H1 (cell line): ENCODE measurements at regions of chr1 and their contacts with region 1.

Region 1: DNA sequence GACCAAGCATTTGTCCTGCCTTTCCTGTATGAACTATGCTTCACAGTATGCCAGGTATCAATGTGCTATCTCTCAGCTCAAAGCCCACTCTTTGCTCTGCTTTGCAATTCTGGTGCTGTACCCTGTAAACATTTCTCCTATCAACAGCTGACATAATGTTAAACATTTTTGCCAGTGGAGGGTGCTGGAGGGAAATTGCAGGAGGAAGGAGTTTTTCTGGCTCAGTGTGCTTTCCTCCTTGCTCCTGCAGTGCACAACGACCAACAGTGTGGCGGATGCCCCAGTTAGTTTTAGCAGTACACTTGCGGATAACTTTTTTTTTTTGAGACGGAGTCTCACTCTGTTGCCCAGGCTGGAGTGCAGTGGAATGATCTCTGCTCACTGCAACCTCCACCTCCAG is 67.1 kb upstream of the PTGFRN start:
- DNase-seq: no peak
- H3K4me3 ChIP-seq: no peak overlapping the region
- H3K27ac ChIP-seq: no peak overlapping the region
- H3K4me1 ChIP-seq: no peaks in the 10 kb centered on the region
- H3K27me3 ChIP-seq: no peaks in the 10 kb centered on the region
- CTCF ChIP-seq: peak in 2 of 3 experiments; percentile 39 to 45; a peak in 3 of 4 replicates
- EP300 ChIP-seq: no peak
- POLR2A ChIP-seq: no peak
- RAD21 ChIP-seq: peak; percentile 43 to 63

Region 2: GRCh38 chr1:116808200-116808847 is 34.3 kb before region 1 on chr1:
- CTCF ChIA-PET with region 1: no interaction called
- POLR2A ChIA-PET with region 1: no interaction called
- DNase-seq: no peak
- H3K4me3 ChIP-seq: no peak overlapping the region
- H3K27ac ChIP-seq: no peak overlapping the region
- H3K4me1 ChIP-seq: peaks cover 0 to 7% (median 0%) of the 10 kb centered on the region in 4 experiments; a peak in 4 of 7 replicates
- H3K27me3 ChIP-seq: no peaks in the 10 kb centered on the region
- CTCF ChIP-seq: no peak
- EP300 ChIP-seq: no peak
- POLR2A ChIP-seq: no peak
- RAD21 ChIP-seq: no peak

Region 3: DNA sequence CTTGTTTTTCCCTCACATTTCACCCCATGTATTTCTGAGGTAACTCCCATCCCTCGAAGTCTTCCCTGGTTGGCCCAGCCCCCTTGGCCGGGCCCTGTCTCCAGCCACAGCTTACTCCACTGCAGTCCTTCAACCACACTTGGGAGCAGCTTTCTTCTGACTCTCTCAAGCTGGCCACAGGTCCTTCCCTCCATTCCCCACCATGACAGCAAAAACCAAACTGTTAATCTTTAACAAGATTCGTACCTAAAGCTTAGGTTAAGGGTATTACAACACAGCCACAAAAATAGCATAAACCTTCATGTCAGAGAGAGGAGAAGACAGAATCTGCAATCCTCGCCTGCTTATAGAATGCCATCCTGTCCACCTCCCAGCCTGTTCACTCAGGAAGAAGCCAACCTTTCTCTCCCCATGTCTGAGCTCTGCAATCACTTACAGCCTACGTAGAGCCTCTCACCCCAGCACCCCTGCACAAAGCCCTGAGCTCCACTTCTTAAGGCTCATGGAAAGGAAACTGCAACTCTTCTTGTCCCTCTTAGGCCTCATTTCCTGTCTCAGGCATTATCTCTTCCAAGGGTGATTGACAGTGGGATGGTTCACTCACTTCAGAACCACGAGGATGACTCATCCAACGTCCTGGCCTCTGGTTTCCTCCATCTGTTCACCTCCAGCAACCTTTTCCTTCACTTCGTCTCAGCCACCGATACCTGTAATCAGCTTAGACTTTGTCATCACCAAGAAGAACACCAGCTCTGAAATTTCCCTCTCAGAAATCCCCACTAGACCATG is 15.6 kb before region 1 on chr1:
- CTCF ChIA-PET with region 1: interaction called, 17 read pairs
- POLR2A ChIA-PET with region 1: no interaction called
- DNase-seq: no peak
- H3K4me3 ChIP-seq: no peak overlapping the region
- H3K27ac ChIP-seq: no peak overlapping the region
- H3K4me1 ChIP-seq: peaks cover 0 to 11% (median 8%) of the 10 kb centered on the region in 4 experiments; a peak in 5 of 7 replicates
- H3K27me3 ChIP-seq: no peaks in the 10 kb centered on the region
- CTCF ChIP-seq: no peak
- EP300 ChIP-seq: no peak
- POLR2A ChIP-seq: no peak
- RAD21 ChIP-seq: no peak

Region 4: DNA sequence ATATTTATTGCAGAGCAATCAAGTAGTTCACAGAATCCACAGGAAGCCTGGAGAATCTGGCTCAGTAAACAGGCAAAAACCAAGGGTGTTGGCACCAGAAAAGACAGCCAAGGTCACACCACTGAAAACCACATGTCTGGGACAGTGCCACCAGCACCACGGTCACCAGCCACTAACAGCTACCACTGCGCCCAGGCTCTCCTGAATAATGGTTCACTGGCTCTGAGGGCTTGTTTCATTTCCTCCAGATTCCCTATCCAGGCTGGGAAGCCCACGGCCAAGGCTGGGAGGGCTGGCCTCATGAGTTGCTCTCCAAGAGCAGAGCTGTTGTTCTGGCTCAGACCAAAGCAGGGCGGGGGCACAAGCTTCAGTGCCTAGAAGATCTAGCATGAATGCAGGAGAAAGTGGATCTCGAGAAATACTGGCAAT is 12.6 kb after region 1 on chr1:
- CTCF ChIA-PET with region 1: interaction called, 10 read pairs
- POLR2A ChIA-PET with region 1: interaction called, 5 read pairs
- DNase-seq: no peak
- H3K4me3 ChIP-seq: no peak overlapping the region; a peak in 1 of 8 replicates
- H3K27ac ChIP-seq: no peak overlapping the region
- H3K4me1 ChIP-seq: peaks cover 17 to 32% (median 29%) of the 10 kb centered on the region in 4 experiments
- H3K27me3 ChIP-seq: no peaks in the 10 kb centered on the region
- CTCF ChIP-seq: no peak
- EP300 ChIP-seq: no peak
- POLR2A ChIP-seq: no peak
- RAD21 ChIP-seq: no peak

Region 5: DNA sequence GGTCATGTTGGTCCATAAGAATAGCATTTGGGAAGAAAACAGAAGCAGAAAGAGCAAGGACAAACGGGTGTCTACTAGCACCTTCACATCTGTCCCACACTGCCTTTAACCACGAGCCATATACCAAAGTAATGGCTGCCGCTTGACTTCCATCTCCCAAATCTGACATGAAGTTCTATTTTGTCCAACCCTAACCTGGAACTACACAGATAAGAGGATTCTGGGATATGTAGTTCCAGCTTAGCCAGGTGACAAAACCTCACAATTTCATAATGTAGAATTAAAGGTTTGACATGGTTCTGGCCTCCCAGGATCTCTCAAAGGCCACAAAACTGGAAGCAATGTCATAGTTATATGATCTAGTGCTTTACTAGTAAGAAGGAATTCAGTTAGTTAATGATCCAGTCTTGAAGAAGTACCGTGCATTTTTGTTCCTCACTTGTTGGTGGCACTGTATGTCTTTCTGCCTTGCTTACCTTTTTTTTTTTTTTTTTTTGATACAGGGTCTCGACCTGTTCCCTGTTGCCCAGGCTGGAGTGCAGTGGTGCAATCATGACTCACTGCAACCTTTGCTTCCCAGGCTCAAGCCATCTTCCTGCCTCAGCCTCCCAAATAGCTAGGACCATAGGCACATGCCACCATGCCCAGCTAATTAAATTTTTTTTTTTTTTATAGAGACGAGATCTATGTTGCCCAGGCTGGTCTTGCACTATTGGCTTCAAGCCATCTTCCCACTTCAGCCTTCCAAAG is 84.6 kb after region 1 on chr1:
- CTCF ChIA-PET with region 1: no interaction called
- POLR2A ChIA-PET with region 1: no interaction called
- DNase-seq: no peak
- H3K4me3 ChIP-seq: no peak overlapping the region
- H3K27ac ChIP-seq: no peak overlapping the region
- H3K4me1 ChIP-seq: no peaks in the 10 kb centered on the region; a peak in 1 of 7 replicates
- H3K27me3 ChIP-seq: no peaks in the 10 kb centered on the region
- CTCF ChIP-seq: no peak
- EP300 ChIP-seq: no peak
- POLR2A ChIP-seq: no peak
- RAD21 ChIP-seq: no peak